ENCODE measurements at regions of chr2 and their contacts with region 1.

Region 1: GRCh38 chr2:130342533-130343275 is at the start of gene IMP4:
- DNase-seq: peak; percentile 98
- ATAC-seq: peak; percentile 90
- H3K4me3 Mint-ChIP-seq: peak within 1 kb of the TSS; percentile 100
- H3K27ac Mint-ChIP-seq: peak within 1 kb of the TSS; percentile 100
- H3K4me1 Mint-ChIP-seq: peaks cover 44% of the 10 kb centered on the region
- H3K27me3 Mint-ChIP-seq: no peaks in the 10 kb centered on the region
- total RNA-seq, gene IMP4: 80.7 to 88.6 TPM

Region 2: GRCh38 chr2:130181325-130181879 is 161.3 kb before region 1 on chr2 and contains the start of gene SMPD4:
- CTCF ChIA-PET with region 1: interaction called, 17 read pairs
- POLR2A ChIA-PET with region 1: interaction called, 12 read pairs
- DNase-seq: peak; percentile 97
- ATAC-seq: peak; percentile 77
- H3K4me3 Mint-ChIP-seq: peak within 1 kb of the TSS; percentile 93
- H3K27ac Mint-ChIP-seq: peak within 1 kb of the TSS; percentile 98
- H3K4me1 Mint-ChIP-seq: peaks cover 34% of the 10 kb centered on the region
- H3K27me3 Mint-ChIP-seq: no peaks in the 10 kb centered on the region
- total RNA-seq, gene SMPD4: 83.9 to 88.2 TPM

Region 3: GRCh38 chr2:130312662-130313061 is 30.0 kb before region 1 on chr2:
- CTCF ChIA-PET with region 1: no interaction called
- POLR2A ChIA-PET with region 1: no interaction called
- DNase-seq: no peak
- ATAC-seq: no peak
- H3K4me3 Mint-ChIP-seq: no peak overlapping the region
- H3K27ac Mint-ChIP-seq: no peak overlapping the region
- H3K4me1 Mint-ChIP-seq: no peaks in the 10 kb centered on the region
- H3K27me3 Mint-ChIP-seq: peaks cover 3% of the 10 kb centered on the region

Region 4: DNA sequence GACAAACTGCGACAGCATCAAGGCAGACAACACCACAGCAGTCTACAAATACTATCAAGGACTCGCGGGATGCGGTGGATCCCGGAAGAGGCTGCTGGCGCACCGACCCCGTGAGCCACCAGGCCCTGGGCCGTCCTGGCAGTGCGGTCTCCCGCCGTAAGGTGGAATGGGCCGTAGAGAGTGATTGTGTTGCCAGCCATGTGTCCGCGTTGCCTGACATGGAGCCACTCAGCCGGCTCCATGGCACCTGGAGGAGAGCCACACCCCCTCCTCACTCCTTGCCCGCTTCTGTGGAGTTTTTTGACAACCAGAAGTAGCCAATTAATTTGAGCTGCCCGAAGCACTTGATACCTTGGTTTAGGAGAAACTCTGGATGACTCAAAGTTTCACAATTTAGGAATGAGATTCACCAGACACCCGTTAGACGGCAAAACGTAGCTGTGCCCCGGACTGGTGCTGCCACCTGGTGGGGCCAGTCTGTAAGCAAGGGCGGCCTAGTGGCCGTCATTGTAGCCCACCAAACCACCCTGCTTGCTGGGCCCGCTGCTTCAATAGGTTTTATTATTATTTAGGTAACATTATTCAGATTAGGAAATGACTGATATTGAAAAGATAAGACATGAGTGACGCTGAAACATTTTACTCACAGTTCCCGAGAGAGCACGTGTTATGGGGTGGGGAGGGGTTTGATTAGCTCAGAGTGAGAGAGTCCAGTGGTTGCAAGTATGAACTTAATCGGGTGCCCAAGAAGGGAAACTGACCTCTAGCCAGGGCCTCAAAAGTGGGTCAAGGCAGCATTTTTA is 10.2 kb before region 1 on chr2:
- CTCF ChIA-PET with region 1: interaction called, 64 read pairs
- POLR2A ChIA-PET with region 1: interaction called, 14 read pairs
- DNase-seq: peak; percentile 78
- ATAC-seq: peak; percentile 84
- H3K4me3 Mint-ChIP-seq: no peak overlapping the region
- H3K27ac Mint-ChIP-seq: no peak overlapping the region
- H3K4me1 Mint-ChIP-seq: peaks cover 7% of the 10 kb centered on the region
- H3K27me3 Mint-ChIP-seq: peaks cover 24% of the 10 kb centered on the region

Region 5: DNA sequence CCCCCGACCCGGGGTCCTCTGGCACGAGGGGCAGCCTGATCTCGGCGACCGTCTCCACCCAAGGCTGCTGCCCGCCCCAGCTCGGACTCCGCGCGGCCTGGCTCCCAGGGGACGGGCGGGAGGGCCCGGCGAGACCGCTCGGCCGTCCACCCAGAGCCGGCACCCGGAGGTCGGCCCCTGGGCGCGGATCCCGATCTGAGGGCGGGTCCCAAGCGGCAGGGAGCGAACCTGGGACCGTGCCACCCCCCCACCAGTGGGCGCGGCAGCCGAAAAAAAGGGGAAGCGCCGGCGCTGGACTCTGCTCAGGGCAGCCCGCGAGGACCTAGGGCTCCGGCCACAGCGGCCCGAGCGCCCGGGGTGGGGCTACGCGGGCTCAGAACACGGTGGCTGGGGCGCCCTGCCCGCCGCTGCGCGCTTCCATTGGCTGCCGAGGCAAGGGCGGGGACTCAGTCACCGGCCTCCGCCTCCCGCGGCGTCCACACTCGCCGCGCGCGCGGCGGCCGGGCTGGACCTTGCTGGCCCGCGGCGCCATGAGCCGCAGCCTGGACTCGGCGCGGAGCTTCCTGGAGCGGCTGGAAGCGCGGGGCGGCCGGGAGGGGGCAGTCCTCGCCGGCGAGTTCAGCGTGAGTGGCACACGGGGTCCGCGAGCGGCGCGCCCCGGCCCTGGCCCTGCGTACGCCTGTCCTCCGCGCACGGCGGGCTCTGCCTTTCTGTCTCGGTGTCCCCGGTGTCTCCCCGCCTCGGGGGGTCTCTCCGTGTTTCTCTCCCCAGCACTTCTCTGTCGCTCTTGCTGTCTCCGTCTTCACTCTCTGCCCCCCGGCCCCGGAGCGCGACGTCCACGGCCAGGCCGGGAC is 13.1 kb after region 1 on chr2 and contains the start of gene PTPN18:
- CTCF ChIA-PET with region 1: interaction called, 13 read pairs
- POLR2A ChIA-PET with region 1: interaction called, 31 read pairs
- DNase-seq: peak; percentile 63
- ATAC-seq: peak; percentile 97
- H3K4me3 Mint-ChIP-seq: peak within 1 kb of the TSS; percentile 71
- H3K27ac Mint-ChIP-seq: peak within 1 kb of the TSS; percentile 26
- H3K4me1 Mint-ChIP-seq: peaks cover 17% of the 10 kb centered on the region
- H3K27me3 Mint-ChIP-seq: peaks cover 7% of the 10 kb centered on the region
- total RNA-seq, gene PTPN18: 67.0 to 71.9 TPM

Region 6: DNA sequence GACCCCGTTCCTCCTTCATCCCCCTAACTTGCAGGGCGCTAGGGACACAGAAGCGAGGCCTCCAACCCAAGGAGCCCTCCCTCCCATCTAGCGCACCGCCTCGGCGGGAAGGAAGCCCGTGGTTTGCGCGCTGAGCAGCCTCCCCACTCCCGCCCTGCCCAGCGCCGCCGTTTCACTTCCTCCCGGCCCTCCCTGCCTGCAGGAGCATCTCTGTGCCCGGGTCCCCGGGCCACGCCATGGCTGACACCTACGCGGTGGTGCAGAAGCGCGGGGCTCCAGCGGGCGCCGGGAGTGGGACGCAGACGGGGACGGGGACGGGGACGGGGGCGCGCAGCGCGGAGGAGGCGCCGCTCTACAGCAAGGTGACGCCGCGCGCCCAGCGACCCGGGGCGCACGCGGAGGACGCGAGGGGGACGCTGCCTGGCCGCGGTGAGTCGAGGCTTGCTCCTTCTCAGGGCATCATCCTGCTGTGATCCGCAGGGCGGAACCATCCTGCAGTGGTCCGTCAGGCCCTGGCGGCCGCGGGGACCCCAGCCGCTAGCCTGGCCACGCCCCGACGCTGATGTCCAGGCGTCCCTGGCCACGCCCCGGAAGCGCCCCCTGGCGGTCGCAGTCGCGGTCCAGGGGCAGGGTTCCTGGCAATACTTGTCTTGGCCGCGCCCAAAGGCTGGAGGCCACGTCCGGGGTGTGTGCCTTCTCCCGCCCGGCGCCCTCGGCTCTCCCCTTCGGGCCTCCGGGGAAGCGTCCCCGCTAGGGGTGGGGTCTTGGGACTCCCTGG is 29.5 kb after region 1 on chr2:
- CTCF ChIA-PET with region 1: interaction called, 13 read pairs
- POLR2A ChIA-PET with region 1: interaction called, 25 read pairs
- DNase-seq: peak; percentile 83
- ATAC-seq: peak; percentile 66
- H3K4me3 Mint-ChIP-seq: peak overlapping the region; percentile 81
- H3K27ac Mint-ChIP-seq: peak overlapping the region; percentile 93
- H3K4me1 Mint-ChIP-seq: peaks cover 71% of the 10 kb centered on the region
- H3K27me3 Mint-ChIP-seq: peaks cover 12% of the 10 kb centered on the region

Region 7: DNA sequence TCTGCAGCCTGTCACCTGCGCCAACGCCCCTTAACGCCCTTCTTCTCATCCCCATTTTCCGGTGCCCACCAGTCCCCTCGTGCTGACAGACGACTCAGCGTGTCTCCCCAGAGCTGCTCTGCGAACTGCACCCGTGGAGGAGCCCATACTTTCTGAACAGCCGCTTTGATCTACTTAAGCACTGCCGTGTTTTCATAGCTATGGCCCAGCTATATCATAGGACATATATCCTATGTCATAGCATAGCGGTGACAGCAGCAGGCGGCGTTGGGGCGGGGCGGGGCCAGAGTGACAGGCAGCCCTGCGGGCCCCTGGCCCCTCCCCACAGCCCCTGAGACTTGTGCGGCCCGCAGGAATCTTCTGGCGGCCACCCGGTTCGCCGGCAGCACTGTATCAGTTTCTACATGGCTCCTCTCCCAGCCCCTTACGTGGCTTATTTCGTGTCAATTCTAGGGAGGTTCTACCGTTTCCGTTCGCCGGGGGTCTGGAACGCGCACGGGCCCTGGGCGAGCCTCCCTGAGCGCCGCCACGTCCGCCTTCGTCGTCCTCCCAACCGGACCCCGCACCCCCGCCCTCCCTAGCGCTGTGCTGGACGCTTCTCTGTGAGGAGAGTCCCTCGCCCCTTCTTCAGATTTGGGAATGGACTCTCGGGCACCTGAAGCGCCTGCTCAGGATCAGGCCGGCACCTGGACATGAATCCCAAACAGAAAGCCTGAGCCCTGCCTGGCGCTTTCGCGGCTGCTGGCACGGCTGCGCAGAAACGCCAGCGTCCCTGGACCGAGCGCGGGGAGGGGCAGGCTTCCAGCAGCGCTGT is 48.6 kb after region 1 on chr2:
- CTCF ChIA-PET with region 1: interaction called, 3 read pairs
- POLR2A ChIA-PET with region 1: interaction called, 12 read pairs
- DNase-seq: peak; percentile 80
- ATAC-seq: peak; percentile 99
- H3K4me3 Mint-ChIP-seq: peak overlapping the region; percentile 86
- H3K27ac Mint-ChIP-seq: peak overlapping the region; percentile 91
- H3K4me1 Mint-ChIP-seq: peaks cover 21% of the 10 kb centered on the region
- H3K27me3 Mint-ChIP-seq: peaks cover 23% of the 10 kb centered on the region

Region 8: GRCh38 chr2:131105156-131105949 is 762.6 kb after region 1 on chr2 and contains the start of gene PLEKHB2:
- CTCF ChIA-PET with region 1: no interaction called
- POLR2A ChIA-PET with region 1: no interaction called
- DNase-seq: peak; percentile 94
- ATAC-seq: peak; percentile 77
- H3K4me3 Mint-ChIP-seq: peak within 1 kb of the TSS; percentile 85
- H3K27ac Mint-ChIP-seq: peak within 1 kb of the TSS; percentile 89
- H3K4me1 Mint-ChIP-seq: peaks cover 48% of the 10 kb centered on the region
- H3K27me3 Mint-ChIP-seq: no peaks in the 10 kb centered on the region
- total RNA-seq, gene PLEKHB2: 62.0 to 64.5 TPM